ENCODE measurements at regions of chr22 and their contacts with region 1.

Region 1: DNA sequence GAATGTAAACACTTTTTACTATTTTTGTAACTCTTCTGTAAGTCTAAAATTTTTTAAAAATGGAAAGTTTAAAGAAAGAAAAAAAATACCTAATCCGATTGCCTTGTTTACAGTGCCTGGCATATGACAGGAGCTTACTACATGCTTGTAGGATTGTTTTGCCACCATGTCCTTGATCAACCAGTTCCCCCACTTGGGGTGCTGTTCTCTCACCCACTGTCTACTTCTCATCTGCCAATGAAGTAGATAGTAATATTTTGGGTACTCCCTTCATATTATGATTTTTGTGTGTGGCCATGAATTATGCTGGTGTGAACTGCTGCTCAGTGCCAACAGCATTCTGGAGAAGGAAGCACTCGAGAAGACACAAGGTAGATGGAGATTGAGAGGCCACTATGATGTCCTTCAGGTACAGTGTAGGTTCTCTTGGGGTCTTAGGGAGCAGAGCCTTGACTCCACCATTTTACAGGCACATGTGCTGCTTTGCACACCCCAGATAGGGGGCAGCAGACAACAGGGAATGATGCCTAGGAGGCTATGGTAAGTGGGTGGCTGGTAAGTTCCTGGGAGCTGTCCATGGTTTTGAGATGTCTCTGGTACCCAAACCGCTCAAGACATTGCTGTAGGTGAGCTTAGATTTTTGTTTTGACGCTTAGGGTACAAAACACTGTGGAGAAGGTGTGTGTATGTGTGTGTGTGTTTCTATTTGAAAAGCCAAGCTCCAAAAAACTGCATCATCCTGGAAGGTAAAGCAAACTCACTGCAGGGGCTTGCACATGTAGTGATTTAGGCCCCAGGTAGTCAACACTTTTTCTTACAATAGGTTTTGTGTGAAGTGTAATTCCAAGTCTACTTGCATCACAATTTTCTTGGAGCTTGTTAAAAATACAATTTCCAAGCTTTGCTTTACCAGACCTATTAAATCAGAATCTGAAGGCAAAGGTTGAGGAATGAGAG is 494.5 kb upstream of the LARGE1 start:
- DNase-seq: peak; percentile 39
- CTCF ChIP-seq: peak; percentile 71

Region 2: DNA sequence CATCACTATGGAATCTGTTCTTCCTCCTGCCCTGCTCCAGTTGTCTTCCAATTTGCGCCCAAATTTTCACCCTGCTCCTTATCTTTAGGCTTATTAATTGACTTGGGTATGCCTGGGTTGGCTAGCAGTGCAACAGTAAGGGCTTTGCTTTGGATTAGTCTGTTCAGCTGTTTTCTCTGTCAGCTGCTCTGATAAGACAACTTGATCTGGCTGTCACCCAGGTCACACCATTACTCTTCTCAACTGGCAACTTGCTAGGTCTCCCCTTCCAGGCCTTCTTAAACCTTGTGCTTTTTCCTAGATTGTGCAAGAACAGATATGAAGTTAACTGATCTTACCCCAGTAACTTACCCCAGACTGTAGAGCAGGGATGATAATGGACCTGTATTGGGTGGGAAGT is 136.6 kb before region 1 on chr22:
- in situ Hi-C with region 1: no loop called
- DNase-seq: no peak
- CTCF ChIP-seq: no peak

Region 3: DNA sequence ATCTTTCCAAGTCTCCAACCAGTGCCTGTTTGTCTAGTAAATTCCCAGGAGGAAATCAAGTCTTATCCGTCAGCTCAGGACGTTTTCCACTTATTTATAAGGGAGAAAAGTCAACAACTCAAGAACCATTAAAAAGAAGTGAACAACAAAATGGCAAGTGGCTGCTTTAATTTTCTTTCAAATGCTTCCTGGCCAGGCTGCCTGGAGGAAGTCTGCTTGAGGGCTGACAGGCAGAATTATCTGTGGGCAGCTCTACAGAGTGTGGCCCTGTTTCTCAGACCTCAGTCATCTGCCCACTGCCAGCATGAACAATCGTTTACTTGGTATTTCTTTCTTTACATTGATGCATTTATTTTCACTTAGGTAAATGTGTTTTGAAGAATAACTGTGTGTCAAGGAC is 369.3 kb after region 1 on chr22:
- in situ Hi-C with region 1: no loop called
- DNase-seq: no peak
- CTCF ChIP-seq: no peak

Region 4: GRCh38 chr22:34800260-34800980 is 385.7 kb after region 1 on chr22:
- in situ Hi-C with region 1: no loop called
- DNase-seq: no peak
- CTCF ChIP-seq: no peak

Region 5: DNA sequence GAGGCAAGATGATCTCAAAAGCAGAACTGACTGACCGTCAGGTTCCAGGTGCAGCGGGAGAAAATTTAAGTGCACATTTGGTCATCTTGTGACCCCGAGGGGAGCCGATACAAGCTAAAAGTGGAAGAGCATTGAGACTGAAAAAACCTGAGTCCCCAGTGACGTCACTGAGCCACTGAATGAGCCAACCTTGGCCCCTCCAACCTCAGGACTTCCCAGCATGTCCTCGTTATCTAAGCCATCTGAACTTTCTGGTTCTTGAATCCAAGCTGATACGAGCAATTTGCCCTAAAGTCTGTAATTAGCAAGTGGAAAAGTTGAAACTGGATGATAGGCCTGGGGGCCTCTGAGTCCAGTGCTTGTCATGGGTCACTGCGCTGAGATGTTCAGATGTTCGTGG is 600.0 kb after region 1 on chr22:
- in situ Hi-C with region 1: loop called (anchors 10 kb)
- DNase-seq: no peak
- CTCF ChIP-seq: no peak

Region 6: GRCh38 chr22:35150183-35151107 is 735.7 kb after region 1 on chr22:
- in situ Hi-C with region 1: loop called (anchors 10 kb)
- DNase-seq: peak; percentile 70
- CTCF ChIP-seq: peak; percentile 80